ENCODE measurements at regions of chr4 and their contacts with region 1.

Region 1: GRCh38 chr4:68498413-68499007 is 51.2 kb downstream of the TMPRSS11E start:
- DNase-seq: peak; percentile 38 to 74 (median 57)
- ATAC-seq: peak; percentile 98 to 100 (median 100)
- H3K4me3 ChIP-seq: no peak overlapping the region
- H3K27ac ChIP-seq: no peak overlapping the region
- H3K4me1 ChIP-seq: peaks cover 0 to 5% (median 0%) of the 10 kb centered on the region in 4 donors
- H3K27me3 ChIP-seq: no peaks in the 10 kb centered on the region
- CTCF ChIP-seq: peak; percentile 84 to 94 (median 88)
- POLR2A ChIP-seq: no peak

Region 2: GRCh38 chr4:68617003-68617698 is 118.6 kb after region 1 on chr4:
- intact Hi-C with region 1: loop called in 1 of 2 experiments (anchors 10 kb)
- DNase-seq: no peak
- ATAC-seq: no peak
- H3K4me3 ChIP-seq: no peak overlapping the region
- H3K27ac ChIP-seq: no peak overlapping the region
- H3K4me1 ChIP-seq: peaks cover 0 to 3% (median 0%) of the 10 kb centered on the region in 4 donors
- H3K27me3 ChIP-seq: no peaks in the 10 kb centered on the region
- CTCF ChIP-seq: no peak
- POLR2A ChIP-seq: no peak

Measured in right lobe of liver (tissue), 6 donors.